AG04449 (cell line): ENCODE measurements at regions of chr5 and their contacts with region 1.

Region 1: GRCh38 chr5:56838409-56839039 is 23.2 kb downstream of the MAP3K1 start:
- DNase-seq: peak; percentile 47
- H3K4me3 ChIP-seq: peak overlapping the region; percentile 21
- CTCF ChIP-seq: peak; percentile 37

Region 2: DNA sequence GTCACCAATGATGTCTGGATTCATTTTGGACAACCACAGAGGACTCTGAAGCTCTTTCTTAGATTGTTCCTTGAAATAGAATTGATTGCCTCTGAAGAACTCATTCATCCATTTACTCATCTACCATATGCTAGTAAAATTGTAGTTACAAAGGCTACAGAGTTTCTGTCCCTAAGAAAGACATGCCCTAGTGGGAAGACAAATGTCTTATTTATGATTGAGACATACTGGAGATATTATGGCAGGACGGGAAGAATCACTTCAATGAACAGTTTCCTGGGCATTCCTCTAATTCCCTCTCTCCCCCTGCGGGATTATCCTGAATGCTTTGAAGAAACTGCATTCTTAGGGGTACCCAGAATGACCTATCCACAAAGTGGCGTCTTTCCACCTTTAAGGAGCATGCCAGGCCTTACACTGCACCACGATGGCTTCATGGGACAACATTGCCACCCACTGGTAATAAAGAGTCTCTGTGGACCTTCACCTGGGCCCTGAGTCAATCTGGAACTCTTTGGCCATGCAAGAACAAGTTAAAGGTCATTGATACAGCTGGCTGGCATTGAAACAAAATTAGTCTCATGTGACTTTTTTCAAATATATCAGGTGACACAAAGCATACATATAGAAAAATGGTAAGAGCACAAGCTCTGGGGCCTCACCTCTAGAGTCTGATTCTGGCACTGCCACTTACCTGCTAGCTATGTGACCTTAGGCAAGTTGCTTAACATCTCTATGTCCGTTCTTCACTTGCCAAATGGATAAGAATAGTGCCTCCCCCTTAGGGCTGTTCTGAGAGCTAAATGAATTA is 637.5 kb before region 1 on chr5:
- CTCF ChIA-PET with region 1: interaction called, 13 read pairs
- POLR2A ChIA-PET with region 1: no interaction called
- DNase-seq: no peak
- H3K4me3 ChIP-seq: no peak overlapping the region
- CTCF ChIP-seq: peak; percentile 74

Region 3: GRCh38 chr5:56278335-56278753 is 560.2 kb before region 1 on chr5:
- CTCF ChIA-PET with region 1: interaction called, 412 read pairs
- POLR2A ChIA-PET with region 1: no interaction called
- DNase-seq: peak; percentile 98
- H3K4me3 ChIP-seq: no peak overlapping the region
- CTCF ChIP-seq: no peak

Region 4: DNA sequence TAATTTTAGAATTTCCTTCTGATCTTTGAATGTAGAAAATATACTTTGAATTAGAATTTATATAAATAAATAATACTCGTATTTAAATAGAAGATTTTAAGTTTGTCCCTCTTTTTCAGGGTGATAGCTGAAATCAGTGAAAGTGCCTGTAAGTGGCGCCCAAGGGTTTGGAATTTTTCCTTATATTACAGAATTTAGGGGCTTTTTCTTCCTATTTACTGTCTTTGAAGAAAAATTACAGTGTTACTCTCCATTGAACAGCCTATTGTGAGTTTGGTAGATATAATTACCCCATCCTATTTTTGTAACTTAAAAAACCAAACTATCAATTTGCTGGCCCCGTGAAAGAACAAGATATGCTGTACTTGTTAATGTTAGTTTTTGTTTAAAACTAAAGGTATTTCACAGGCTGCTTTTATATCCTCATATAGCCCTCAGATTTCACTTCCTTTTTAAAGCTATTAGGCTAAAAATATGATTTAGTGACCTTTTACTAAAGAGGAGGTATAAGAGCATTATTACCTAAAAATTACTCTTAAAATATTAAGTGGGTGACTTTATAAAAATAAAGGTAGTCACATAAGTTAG is 20.0 kb before region 1 on chr5:
- CTCF ChIA-PET with region 1: interaction called, 22 read pairs
- POLR2A ChIA-PET with region 1: no interaction called
- DNase-seq: no peak
- H3K4me3 ChIP-seq: no peak overlapping the region
- CTCF ChIP-seq: no peak

Region 5: GRCh38 chr5:56856541-56857178 is 18.1 kb after region 1 on chr5:
- CTCF ChIA-PET with region 1: interaction called, 11 read pairs
- POLR2A ChIA-PET with region 1: no interaction called
- DNase-seq: no peak
- H3K4me3 ChIP-seq: no peak overlapping the region
- CTCF ChIP-seq: no peak